ENCODE measurements at regions of chr19 and their contacts with region 1.

Region 1: DNA sequence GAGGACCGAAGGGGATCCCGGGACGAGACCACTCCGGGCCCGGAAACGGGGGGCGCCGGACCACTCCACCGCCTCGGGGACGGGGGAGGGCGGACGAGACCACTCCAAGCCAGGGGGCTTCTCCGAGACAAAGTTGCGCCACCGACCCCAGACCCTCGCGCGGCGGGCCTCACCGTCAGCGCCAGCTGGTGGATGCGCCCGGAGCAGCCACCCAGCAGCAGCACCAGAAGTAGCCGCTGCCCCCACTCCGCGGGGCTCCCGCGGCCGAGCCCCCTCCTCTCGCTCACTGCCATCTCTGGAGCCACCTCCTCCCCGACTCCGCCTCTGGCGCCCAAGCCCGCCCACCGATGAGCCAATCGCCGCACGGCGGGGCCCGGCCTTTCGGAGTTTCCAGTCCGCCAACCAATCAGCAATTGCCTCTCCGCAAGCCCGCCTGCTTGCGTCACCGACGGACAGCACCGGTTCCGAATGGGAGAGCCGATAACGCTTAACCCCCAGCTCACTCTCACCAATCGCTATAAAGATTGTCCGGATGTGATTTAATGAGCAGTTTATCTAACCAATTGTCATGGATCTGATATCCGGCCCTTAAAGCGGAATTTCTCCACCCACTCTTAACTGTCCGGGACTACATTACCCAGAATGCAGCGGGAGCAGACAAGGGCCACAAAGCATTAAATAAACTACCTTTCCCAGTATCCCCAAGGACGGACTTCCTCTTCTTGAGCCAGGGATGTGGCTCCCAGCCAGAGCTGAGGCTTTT is at the start of gene GPR108:
- DNase-seq: peak; percentile 96
- H3K4me3 ChIP-seq: peak within 1 kb of the TSS; percentile 90 to 91
- H3K27ac ChIP-seq: peak within 1 kb of the TSS; percentile 90 to 96
- H3K4me1 ChIP-seq: peaks cover 22 to 23% of the 10 kb centered on the region in 2 experiments; a peak in 3 of 4 replicates
- H3K27me3 ChIP-seq: no peaks in the 10 kb centered on the region
- CTCF ChIP-seq: no peak
- EP300 ChIP-seq: peak in 1 of 2 experiments; percentile 72; a peak in 2 of 4 replicates
- RAD21 ChIP-seq: no peak
- polyA plus RNA-seq, gene GPR108: 51.4 and 54.2 TPM in 2 replicates

Region 2: GRCh38 chr19:6639439-6639838 is 98.0 kb before region 1 on chr19:
- CTCF ChIA-PET with region 1: no interaction called
- POLR2A ChIA-PET with region 1: no interaction called
- DNase-seq: no peak
- H3K4me3 ChIP-seq: no peak overlapping the region
- H3K27ac ChIP-seq: no peak overlapping the region
- H3K4me1 ChIP-seq: no peaks in the 10 kb centered on the region
- H3K27me3 ChIP-seq: peaks cover 48% of the 10 kb centered on the region; the same call in 1 of the 2 replicates
- CTCF ChIP-seq: no peak
- EP300 ChIP-seq: no peak
- RAD21 ChIP-seq: no peak

Region 3: DNA sequence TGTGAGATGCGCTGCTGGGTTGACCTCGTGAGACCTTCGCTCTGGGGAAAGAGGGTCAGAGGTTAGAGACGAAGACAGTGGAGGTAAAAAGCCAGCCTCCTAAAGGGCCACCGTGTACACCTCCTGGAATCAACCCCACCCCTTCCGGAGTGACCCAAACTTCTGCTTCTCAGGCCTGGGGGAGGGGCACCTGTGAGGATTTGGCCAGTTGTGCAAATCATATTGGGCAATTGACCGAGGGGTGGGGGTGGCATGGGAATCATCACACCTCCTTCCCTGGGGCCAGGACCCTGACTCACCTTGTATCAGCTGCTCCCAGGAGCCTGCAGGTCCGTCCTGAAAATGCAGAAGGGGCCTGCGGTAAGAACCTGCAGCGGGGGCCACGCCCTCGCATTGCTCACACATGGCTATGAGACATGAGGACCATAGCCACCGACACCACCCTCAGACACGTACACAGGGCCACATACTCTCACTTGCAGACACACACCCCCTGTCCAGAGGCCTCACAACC is 70.3 kb before region 1 on chr19:
- CTCF ChIA-PET with region 1: no interaction called
- POLR2A ChIA-PET with region 1: no interaction called
- DNase-seq: no peak
- H3K4me3 ChIP-seq: no peak overlapping the region
- H3K27ac ChIP-seq: no peak overlapping the region
- H3K4me1 ChIP-seq: no peaks in the 10 kb centered on the region
- H3K27me3 ChIP-seq: peaks cover 63% of the 10 kb centered on the region
- CTCF ChIP-seq: no peak
- EP300 ChIP-seq: no peak
- RAD21 ChIP-seq: no peak

Region 4: DNA sequence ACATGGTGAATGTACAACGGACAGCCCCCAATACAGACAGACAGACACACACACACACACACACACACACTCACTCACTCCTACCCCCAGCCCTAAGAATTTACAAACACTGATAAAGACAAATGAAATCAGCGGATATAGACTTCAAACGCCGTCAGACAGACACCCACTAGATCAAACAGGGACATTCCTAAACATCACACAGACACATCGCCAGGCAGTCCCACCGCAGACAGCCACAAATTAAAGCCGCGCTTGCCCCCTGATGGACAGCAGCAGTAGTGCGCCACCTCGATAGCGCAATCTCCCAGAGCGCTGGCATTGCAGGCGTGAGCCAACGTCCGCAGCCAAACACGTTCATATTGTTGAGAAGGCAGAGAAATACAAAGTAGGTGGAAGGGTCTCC is 125.2 kb after region 1 on chr19:
- CTCF ChIA-PET with region 1: interaction called, 24 read pairs
- POLR2A ChIA-PET with region 1: no interaction called
- DNase-seq: peak; percentile 65
- H3K4me3 ChIP-seq: peak overlapping the region in 1 of 2 experiments; percentile 29; a peak in 1 of 4 replicates
- H3K27ac ChIP-seq: no peak overlapping the region
- H3K4me1 ChIP-seq: no peaks in the 10 kb centered on the region
- H3K27me3 ChIP-seq: peaks cover 47% of the 10 kb centered on the region; the same call in 1 of the 2 replicates
- CTCF ChIP-seq: peak; percentile 75
- EP300 ChIP-seq: no peak
- RAD21 ChIP-seq: peak; percentile 73